ENCODE measurements at regions of chr14 and their contacts with region 1.

Region 1: DNA sequence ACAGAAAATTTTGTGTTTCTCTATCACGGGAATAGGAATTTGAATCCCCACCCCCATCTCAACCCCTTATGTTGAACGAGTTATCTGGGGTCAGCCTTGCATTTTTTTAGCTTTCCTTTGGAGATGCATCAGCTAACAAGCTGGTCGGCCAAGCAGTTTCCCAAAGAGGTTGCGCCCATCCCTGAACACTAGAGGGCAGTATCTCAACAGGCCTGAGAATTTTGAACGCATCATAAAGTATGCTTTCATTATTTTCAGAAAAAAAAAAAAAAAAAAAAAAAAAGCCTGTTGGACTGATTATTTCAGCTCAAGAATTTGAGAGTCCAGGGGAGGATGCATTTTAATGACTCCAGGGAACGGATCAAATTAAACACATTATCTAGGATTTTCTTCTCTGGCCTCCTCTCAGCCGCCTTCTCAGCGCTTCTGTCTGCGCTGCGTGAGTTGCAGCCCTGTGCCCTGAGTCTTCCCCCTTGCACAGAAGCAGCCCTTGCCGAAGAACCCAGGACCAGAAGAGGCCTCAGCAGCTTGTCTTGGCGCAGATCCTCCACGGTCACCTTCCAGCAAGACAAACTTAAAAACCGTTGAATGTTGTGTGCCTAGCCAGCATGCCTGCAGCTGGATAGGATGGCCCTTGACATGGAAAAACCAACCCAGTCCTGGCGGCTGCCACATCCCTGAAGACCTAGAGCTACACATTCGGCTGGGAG is 76.6 kb upstream of the GZMB start:
- DNase-seq: peak; percentile 68
- ATAC-seq: peak; percentile 73
- H3K4me3 Mint-ChIP-seq: no peak overlapping the region
- H3K27ac Mint-ChIP-seq: no peak overlapping the region
- H3K4me1 Mint-ChIP-seq: peaks cover 14% of the 10 kb centered on the region
- H3K27me3 Mint-ChIP-seq: no peaks in the 10 kb centered on the region
- CTCF ChIP-seq: peak; percentile 38; the same call in 1 of the 2 replicates

Region 2: DNA sequence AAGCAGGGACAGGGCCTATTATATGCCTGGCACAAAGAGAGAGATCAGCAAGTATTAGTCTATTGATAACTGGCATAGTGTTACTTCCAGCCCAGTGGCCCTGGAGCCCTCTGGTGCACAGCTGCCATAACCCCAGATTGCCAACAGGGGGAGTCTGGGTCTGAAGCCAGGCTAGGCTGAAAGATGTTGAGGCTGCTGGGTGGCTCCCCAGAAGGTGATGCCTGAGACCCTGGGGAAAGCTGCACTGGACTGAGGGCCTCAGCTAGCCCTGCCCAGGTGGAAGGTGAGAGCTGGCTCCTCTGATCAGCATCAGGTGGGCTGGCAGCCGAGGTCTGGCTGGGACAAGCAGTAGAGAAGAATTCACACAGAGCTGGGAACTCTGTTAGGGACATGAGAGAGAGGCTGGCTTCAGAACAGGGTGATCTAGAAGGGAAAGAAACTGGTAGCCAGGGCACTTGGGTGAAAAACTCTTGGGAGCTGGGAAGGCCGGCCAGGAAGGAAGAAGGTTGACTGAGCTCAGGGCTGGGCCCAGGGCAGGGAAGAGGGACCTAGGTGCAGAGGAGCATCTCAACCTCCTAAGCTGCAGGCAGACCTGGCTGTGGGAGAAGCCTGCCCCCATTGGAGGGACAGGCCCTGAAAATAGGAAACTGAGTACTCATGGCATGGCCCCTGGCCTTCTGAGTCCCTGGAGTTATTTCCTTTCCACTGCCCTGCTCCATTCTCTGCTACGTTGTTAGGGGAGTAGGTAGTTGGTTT is 104.9 kb before region 1 on chr14:
- CTCF ChIA-PET with region 1: interaction called, 11 read pairs
- POLR2A ChIA-PET with region 1: no interaction called
- DNase-seq: peak; percentile 82
- ATAC-seq: peak; percentile 98
- H3K4me3 Mint-ChIP-seq: no peak overlapping the region
- H3K27ac Mint-ChIP-seq: no peak overlapping the region
- H3K4me1 Mint-ChIP-seq: peaks cover 2% of the 10 kb centered on the region
- H3K27me3 Mint-ChIP-seq: peaks cover 4% of the 10 kb centered on the region; the same call in 1 of the 2 replicates
- CTCF ChIP-seq: peak; percentile 97

Region 3: GRCh38 chr14:24699052-24699451 is 11.5 kb before region 1 on chr14:
- CTCF ChIA-PET with region 1: interaction called, 12 read pairs
- POLR2A ChIA-PET with region 1: no interaction called
- DNase-seq: no peak
- ATAC-seq: no peak
- H3K4me3 Mint-ChIP-seq: no peak overlapping the region
- H3K27ac Mint-ChIP-seq: no peak overlapping the region
- H3K4me1 Mint-ChIP-seq: no peaks in the 10 kb centered on the region
- H3K27me3 Mint-ChIP-seq: no peaks in the 10 kb centered on the region; the same call in 1 of the 2 replicates
- CTCF ChIP-seq: no peak

Region 4: GRCh38 chr14:24734878-24735500 is 24.4 kb after region 1 on chr14:
- CTCF ChIA-PET with region 1: interaction called, 17 read pairs
- POLR2A ChIA-PET with region 1: no interaction called
- DNase-seq: peak; percentile 17
- ATAC-seq: peak; percentile 78
- H3K4me3 Mint-ChIP-seq: no peak overlapping the region
- H3K27ac Mint-ChIP-seq: no peak overlapping the region
- H3K4me1 Mint-ChIP-seq: peaks cover 18% of the 10 kb centered on the region
- H3K27me3 Mint-ChIP-seq: no peaks in the 10 kb centered on the region; the same call in 1 of the 2 replicates
- CTCF ChIP-seq: peak; percentile 56

Region 5: DNA sequence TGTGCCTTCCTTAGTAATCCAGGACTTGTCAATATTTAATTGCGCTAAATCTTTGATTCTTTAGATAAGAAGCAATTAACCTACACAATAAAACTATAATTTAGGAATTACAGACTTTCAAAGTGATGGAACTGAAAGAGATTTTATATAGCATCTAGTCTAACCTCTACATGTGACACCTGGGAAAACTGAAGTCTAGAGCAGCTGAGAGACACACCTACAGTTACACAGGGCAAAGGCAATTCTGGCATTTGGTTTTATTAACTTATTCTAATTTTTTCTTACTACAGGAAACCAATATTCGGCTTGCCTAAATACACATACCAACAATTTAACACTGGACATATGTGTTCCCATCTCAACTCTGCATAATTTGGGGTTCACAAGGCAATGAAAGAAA is 142.9 kb after region 1 on chr14:
- CTCF ChIA-PET with region 1: no interaction called
- POLR2A ChIA-PET with region 1: no interaction called
- DNase-seq: no peak
- ATAC-seq: no peak
- H3K4me3 Mint-ChIP-seq: no peak overlapping the region
- H3K27ac Mint-ChIP-seq: no peak overlapping the region
- H3K4me1 Mint-ChIP-seq: peaks cover 47% of the 10 kb centered on the region
- H3K27me3 Mint-ChIP-seq: no peaks in the 10 kb centered on the region
- CTCF ChIP-seq: no peak

Region 6: DNA sequence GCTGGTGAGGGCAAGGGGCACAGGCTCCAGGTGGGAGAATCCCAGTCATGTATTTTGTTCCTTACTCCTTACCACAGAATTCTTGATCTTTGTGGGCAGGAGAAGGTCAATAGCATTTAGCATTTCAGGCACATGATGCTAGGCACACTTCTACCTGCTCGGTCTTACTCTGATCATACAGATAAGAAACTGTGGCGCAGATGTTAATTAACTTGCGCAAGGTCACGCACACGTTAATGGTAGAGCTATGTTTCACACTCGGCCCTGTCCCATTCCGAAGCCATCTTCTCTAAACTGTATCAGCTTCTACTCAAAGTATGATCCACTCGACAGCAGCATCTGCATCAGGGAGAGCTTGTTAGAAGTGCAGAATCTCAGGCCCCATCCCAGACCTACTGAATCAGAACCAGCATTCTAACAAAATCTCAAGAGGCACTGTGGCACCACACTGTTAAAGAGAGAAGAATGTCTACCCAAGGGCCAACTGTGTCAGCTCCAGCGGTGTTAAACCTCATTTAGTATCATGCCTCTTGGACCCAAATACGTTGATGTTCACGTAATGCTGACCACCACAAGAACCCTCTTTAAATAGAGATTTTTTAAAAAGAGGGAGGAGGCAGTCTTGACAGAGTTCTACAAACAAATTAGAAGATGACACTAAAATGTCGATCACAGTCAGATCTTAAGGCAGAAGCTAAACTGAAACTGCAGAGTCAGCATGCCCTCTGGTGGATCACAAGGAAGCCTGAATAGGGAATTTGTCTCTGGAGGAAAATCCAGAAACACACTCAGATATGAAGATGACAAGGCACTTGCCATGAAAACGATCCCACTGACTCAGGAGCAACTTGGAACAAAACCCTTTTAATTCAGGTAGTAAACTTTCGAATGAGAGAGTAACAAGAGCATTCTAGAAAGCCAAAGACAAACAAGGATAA is 332.1 kb after region 1 on chr14:
- CTCF ChIA-PET with region 1: interaction called, 10 read pairs
- POLR2A ChIA-PET with region 1: no interaction called
- DNase-seq: peak; percentile 24
- ATAC-seq: peak; percentile 46; the same call in 1 of the 2 replicates
- H3K4me3 Mint-ChIP-seq: no peak overlapping the region
- H3K27ac Mint-ChIP-seq: peak overlapping the region; percentile 67; the same call in 1 of the 2 replicates
- H3K4me1 Mint-ChIP-seq: peaks cover 22% of the 10 kb centered on the region
- H3K27me3 Mint-ChIP-seq: peaks cover 9% of the 10 kb centered on the region
- CTCF ChIP-seq: no peak